Right ventricle myocardium inferior (tissue), 1 donor: ENCODE measurements at regions of chr16 and their contacts with region 1.

Region 1: DNA sequence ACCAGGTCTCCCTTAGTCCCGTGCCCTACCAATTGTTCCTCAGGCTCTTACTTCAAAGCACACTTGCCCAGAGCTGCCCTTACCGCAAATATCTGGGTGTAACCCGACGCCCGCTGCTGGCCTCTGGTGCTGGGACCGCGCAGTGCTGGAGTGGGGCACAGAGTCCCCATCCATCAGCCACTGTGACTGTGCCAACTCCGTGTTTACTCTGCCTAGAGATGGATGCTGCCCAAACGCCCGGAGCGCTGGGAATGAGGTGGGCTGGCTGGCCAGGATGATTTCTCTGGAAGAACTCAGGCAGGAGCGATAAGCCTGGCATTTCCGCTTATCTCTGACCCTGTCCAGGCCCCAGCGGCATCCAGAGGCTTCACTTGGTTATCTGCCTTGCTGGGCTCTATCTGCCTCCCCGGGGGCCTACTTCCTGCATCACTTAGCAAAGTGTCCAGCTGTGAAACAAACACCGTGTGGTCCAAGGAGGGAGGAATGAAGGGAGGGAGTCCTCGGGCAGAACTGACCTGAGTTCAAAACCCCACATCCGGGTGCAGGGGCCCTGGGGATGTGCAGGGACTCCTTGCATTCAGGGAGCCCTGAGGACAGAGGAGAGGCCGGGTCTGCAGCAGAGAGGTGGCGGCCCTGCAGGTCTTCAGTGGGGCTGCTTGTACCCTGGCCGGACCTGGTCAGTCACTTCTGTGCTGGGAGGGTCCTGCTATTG is 9.4 kb upstream of the MYLK3 start:
- DNase-seq: peak; percentile 83
- ATAC-seq: peak; percentile 84

Region 2: GRCh38 chr16:46715769-46716305 is 41.7 kb before region 1 on chr16:
- intact Hi-C with region 1: loop called (anchors 1 kb)
- DNase-seq: peak; percentile 82
- ATAC-seq: peak; percentile 79

Region 3: DNA sequence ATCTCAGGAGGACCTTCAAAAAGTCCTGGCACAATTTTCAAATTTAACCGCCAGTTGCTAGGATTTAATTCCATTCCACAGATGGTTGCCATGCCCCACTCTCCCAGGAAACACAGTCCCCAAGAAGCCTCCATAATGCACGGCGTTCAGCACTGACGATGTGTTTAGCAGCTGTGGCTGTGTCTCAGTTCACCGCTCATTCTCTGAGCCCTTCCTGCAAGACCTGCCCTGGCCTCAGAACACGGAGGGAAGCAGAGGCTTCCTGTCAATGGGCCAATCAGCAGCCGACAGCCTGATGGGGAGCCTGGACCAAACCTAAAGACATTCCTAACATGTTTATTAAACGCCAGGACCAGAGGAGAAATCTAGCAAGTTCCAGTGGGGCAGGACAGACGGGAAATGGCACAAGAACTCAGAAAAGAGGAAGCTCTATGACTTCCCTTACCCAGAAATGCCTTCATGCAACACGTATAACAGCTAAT is 14.2 kb before region 1 on chr16:
- intact Hi-C with region 1: loop called (anchors 1 kb)
- DNase-seq: no peak
- ATAC-seq: peak; percentile 20

Region 4: DNA sequence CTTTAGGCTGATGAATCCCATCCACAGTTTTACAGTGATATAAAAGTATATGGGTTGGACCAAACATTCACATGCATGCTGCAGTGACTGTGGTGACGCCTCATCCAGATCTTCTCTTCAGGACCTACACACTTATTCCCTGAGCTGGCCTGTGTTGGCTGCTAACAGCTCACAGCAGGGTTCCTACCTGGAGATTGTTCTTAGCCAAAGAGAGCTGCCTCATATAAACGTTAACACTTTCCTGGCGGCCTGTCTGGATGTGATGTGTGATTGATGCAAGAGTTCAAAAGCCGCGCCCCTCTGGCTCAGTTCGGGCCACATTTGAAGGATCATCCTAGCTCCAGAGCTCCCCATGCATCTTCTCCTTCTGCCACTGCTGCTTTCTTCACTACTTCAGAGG is 479.2 kb after region 1 on chr16:
- intact Hi-C with region 1: no loop called
- DNase-seq: no peak
- ATAC-seq: no peak